Sigmoid colon (tissue), 7 donors: ENCODE measurements at regions of chr3 and their contacts with region 1.

Region 1: DNA sequence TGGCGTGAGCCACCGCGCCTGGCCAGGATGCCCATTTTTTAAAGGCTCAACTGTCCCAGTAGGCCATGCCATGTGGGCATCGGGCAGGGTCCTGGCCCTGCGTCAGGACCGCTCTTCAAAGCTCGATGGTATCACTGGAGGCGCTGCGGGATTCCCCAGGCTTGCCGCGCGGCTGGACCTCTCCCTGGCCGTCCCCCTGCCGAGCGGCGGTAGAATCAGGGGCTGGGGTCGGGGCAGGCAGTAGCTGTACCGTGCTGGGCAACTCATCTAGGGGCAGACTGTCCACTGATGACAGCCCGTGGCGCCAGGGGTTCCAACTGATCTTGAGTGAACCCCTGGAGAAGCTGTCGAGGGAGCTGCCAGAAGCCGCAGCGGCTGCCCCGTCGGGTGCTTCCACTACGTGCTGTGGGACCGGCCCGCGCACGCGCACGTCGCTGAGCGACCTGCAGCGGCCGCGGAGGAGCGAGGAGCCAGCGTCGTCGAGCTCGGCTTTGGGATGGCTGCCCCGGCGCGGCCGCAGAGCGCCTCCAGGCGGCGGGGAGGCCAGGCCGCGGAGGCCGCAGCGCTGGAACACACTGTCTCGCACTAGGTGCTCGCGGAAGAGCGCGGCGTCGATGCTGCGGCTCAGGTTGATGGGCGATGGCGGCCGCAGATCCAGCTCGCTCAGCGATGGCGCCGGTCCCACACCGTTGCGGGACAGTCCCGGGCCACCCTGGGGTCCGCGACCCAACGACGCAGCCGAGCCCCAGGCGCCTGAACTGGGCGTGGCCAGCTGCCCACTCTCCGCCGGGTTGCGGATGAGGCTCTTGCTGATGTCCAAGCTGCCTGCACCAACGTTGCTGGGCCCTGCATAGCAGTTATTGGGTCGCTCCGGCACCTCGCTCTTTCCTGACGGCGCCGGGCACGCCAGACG is 5.8 kb downstream of the PRRT3 start:
- DNase-seq: peak; percentile 96
- H3K4me3 ChIP-seq: peak overlapping the region; percentile 51 to 66 (median 64)
- H3K27ac ChIP-seq: peak overlapping the region; percentile 82 to 95 (median 90)
- H3K4me1 ChIP-seq: peaks cover 0 to 28% (median 17%) of the 10 kb centered on the region in 4 donors
- H3K27me3 ChIP-seq: no peaks in the 10 kb centered on the region
- CTCF ChIP-seq: peak; percentile 24 to 57 (median 47)
- EP300 ChIP-seq: no peak
- POLR2A ChIP-seq: peak; percentile 30 to 41

Region 2: DNA sequence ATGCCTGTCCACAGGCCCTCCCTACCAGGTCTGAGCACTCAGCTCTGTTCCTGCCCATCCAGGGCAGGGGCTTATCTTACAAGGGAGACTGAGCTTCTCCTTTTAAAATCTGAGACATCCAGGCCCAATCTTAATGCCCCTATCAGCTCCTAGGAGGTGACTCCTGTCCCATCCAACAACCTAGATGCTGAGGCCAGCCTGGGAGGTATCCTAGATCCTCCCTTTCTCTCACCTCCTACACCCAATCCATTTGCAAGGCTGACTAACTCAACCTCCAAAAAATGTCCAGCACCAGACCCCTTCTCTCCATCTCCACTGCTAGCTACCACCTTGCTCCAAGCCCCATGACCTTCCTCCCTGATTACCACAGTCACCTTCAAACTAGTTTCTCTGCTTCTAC is 410.2 kb before region 1 on chr3:
- intact Hi-C with region 1: no loop called
- DNase-seq: no peak
- H3K4me3 ChIP-seq: no peak overlapping the region
- H3K27ac ChIP-seq: no peak overlapping the region
- H3K4me1 ChIP-seq: no peaks in the 10 kb centered on the region
- H3K27me3 ChIP-seq: no peaks in the 10 kb centered on the region
- CTCF ChIP-seq: no peak
- EP300 ChIP-seq: no peak
- POLR2A ChIP-seq: no peak

Region 3: GRCh38 chr3:9715764-9716437 is 230.5 kb before region 1 on chr3:
- intact Hi-C with region 1: loop called (anchors 5 kb)
- DNase-seq: peak; percentile 94
- H3K4me3 ChIP-seq: no peak overlapping the region
- H3K27ac ChIP-seq: peak overlapping the region; percentile 68 to 80 (median 72)
- H3K4me1 ChIP-seq: peaks cover 0 to 19% (median 10%) of the 10 kb centered on the region in 4 donors
- H3K27me3 ChIP-seq: no peaks in the 10 kb centered on the region
- CTCF ChIP-seq: peak; percentile 74 to 81 (median 79)
- EP300 ChIP-seq: no peak
- POLR2A ChIP-seq: no peak

Region 4: GRCh38 chr3:9843715-9844438 is 102.5 kb before region 1 on chr3 and contains the start of gene RPUSD3:
- intact Hi-C with region 1: loop called (anchors 5 kb)
- DNase-seq: peak; percentile 99
- H3K4me3 ChIP-seq: peak within 1 kb of the TSS; percentile 56 to 84 (median 78)
- H3K27ac ChIP-seq: peak within 1 kb of the TSS; percentile 80 to 93 (median 89)
- H3K4me1 ChIP-seq: peaks cover 0 to 19% (median 12%) of the 10 kb centered on the region in 4 donors
- H3K27me3 ChIP-seq: no peaks in the 10 kb centered on the region
- CTCF ChIP-seq: no peak
- EP300 ChIP-seq: no peak
- POLR2A ChIP-seq: peak in 1 of 2 donors; percentile 50
- total RNA-seq, gene RPUSD3: 42.6 to 54.7 (median 47.6) TPM

Region 5: GRCh38 chr3:9915254-9916141 is 30.9 kb before region 1 on chr3:
- intact Hi-C with region 1: loop called (anchors 2 kb)
- DNase-seq: peak; percentile 91
- H3K4me3 ChIP-seq: peak overlapping the region; percentile 47 to 83 (median 68)
- H3K27ac ChIP-seq: peak overlapping the region; percentile 83 to 98 (median 96)
- H3K4me1 ChIP-seq: peaks cover 0 to 56% (median 47%) of the 10 kb centered on the region in 4 donors
- H3K27me3 ChIP-seq: no peaks in the 10 kb centered on the region
- CTCF ChIP-seq: peak in 3 of 4 experiments; percentile 47 to 61 (median 52)
- EP300 ChIP-seq: no peak
- POLR2A ChIP-seq: peak; percentile 18 to 41

Region 6: GRCh38 chr3:9932843-9933560 is 13.4 kb before region 1 on chr3:
- intact Hi-C with region 1: loop called (anchors 1 kb)
- DNase-seq: peak; percentile 95
- H3K4me3 ChIP-seq: peak overlapping the region; percentile 57 to 80 (median 62)
- H3K27ac ChIP-seq: peak overlapping the region; percentile 94 to 99 (median 96)
- H3K4me1 ChIP-seq: peaks cover 0 to 40% (median 35%) of the 10 kb centered on the region in 4 donors
- H3K27me3 ChIP-seq: no peaks in the 10 kb centered on the region
- CTCF ChIP-seq: peak; percentile 74 to 84 (median 82)
- EP300 ChIP-seq: no peak
- POLR2A ChIP-seq: no peak

Region 7: DNA sequence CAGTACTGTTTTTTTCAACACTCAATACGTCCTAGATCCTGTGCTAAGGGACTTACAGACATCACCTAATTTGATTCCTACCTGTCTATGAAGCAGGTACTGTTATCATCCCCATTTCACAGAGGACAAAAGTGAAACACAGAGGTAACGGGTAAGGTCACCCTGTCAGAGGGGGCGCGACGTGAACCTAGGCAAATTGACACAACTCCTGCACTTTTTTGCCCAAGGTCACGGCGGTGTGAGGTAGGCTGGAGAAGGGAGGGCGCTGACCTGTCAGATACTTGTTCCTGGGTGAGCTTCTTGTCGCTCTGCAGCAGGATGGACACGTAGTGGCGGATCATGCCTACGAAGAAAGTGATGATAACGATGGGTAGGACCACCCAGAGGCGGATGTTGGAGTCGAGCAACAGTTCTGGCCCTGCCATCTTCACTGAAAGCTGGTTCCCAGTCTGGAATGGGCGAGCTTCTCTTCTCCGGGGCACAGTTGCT is 39.9 kb after region 1 on chr3:
- intact Hi-C with region 1: loop called (anchors 5 kb)
- DNase-seq: no peak
- H3K4me3 ChIP-seq: peak overlapping the region; percentile 62 to 94 (median 86)
- H3K27ac ChIP-seq: peak overlapping the region; percentile 78 to 87 (median 82)
- H3K4me1 ChIP-seq: peaks cover 0 to 39% (median 38%) of the 10 kb centered on the region in 4 donors
- H3K27me3 ChIP-seq: no peaks in the 10 kb centered on the region
- CTCF ChIP-seq: no peak
- EP300 ChIP-seq: no peak
- POLR2A ChIP-seq: no peak

Region 8: DNA sequence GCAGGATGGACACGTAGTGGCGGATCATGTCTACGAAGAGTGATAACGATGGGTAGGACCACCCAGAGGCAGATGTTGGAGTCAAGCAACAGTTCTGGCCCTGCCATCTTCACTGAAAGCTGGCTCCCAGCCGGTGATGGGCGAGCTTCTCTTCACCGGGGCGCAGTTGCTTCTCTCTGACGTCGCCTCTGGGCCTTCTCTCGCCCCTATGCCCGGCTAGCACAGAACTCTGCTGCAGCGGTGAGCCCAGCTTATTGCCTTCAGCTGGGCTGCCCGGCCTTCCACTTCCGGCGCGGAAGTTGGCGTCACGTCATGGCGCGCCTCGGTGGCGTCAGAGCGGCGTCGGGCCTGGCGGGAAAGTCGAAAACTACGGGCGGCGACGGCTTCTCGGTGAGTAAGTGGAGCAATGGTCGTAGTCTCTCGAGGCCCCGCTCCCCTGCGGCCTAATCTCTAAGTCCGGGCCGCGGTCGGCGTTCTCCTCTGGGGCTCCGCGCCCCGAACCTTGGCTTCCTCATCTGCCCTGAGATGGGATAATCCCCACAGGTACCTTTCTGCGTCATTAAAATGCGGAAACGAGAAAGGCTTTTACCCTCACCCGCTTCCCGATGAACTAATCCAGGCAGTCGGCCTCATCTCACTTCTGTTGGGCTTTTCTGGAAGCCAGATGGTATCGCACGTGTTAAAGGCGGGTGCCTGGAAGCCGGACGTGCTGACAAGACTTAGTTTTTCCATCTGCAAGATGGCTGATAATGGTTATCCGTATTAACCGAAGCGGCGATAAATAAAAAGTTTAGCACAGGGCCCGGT is 79.9 kb after region 1 on chr3 and contains the start of gene FANCD2:
- intact Hi-C with region 1: loop called (anchors 5 kb)
- DNase-seq: peak; percentile 92
- H3K4me3 ChIP-seq: peak within 1 kb of the TSS; percentile 73 to 93 (median 83)
- H3K27ac ChIP-seq: peak within 1 kb of the TSS; percentile 77 to 85 (median 81)
- H3K4me1 ChIP-seq: peaks cover 0 to 28% (median 25%) of the 10 kb centered on the region in 4 donors
- H3K27me3 ChIP-seq: no peaks in the 10 kb centered on the region
- CTCF ChIP-seq: no peak
- EP300 ChIP-seq: peak in 1 of 4 donors; percentile 60
- POLR2A ChIP-seq: peak; percentile 74 to 78
- total RNA-seq, gene FANCD2: 1.5 to 5.8 (median 3.1) TPM

Region 9: GRCh38 chr3:10099041-10099440 is 152.7 kb after region 1 on chr3:
- intact Hi-C with region 1: no loop called
- DNase-seq: no peak
- H3K4me3 ChIP-seq: no peak overlapping the region
- H3K27ac ChIP-seq: no peak overlapping the region
- H3K4me1 ChIP-seq: no peaks in the 10 kb centered on the region
- H3K27me3 ChIP-seq: no peaks in the 10 kb centered on the region
- CTCF ChIP-seq: no peak
- EP300 ChIP-seq: no peak
- POLR2A ChIP-seq: no peak

Region 10: GRCh38 chr3:10185804-10186762 is 239.7 kb after region 1 on chr3:
- intact Hi-C with region 1: no loop called
- DNase-seq: no peak
- H3K4me3 ChIP-seq: no peak overlapping the region
- H3K27ac ChIP-seq: peak overlapping the region in 1 of 4 donors; percentile 2
- H3K4me1 ChIP-seq: peaks cover 0 to 33% (median 26%) of the 10 kb centered on the region in 4 donors
- H3K27me3 ChIP-seq: no peaks in the 10 kb centered on the region
- CTCF ChIP-seq: no peak
- EP300 ChIP-seq: no peak
- POLR2A ChIP-seq: no peak

Region 11: GRCh38 chr3:10224784-10225665 is 278.7 kb after region 1 on chr3:
- intact Hi-C with region 1: no loop called
- DNase-seq: peak; percentile 82
- H3K4me3 ChIP-seq: no peak overlapping the region
- H3K27ac ChIP-seq: no peak overlapping the region
- H3K4me1 ChIP-seq: peaks cover 0 to 7% (median 6%) of the 10 kb centered on the region in 4 donors
- H3K27me3 ChIP-seq: no peaks in the 10 kb centered on the region
- CTCF ChIP-seq: peak; percentile 77 to 86 (median 84)
- EP300 ChIP-seq: no peak
- POLR2A ChIP-seq: no peak